ENCODE measurements at regions of chr20 and their contacts with region 1.

Region 1: GRCh38 chr20:407133-407952 is 756 bp upstream of the RBCK1 start:
- DNase-seq: peak in 7 of 9 experiments; percentile 48 to 83 (median 68)
- ATAC-seq: peak; percentile 71
- H3K4me3 ChIP-seq: peak overlapping the region; percentile 56 to 71
- H3K4me3 Mint-ChIP-seq: peak overlapping the region; percentile 91
- H3K27ac ChIP-seq: peak overlapping the region; percentile 9 to 41
- H3K27ac Mint-ChIP-seq: peak overlapping the region; percentile 95
- H3K4me1 ChIP-seq: peaks cover 34% of the 10 kb centered on the region
- H3K4me1 Mint-ChIP-seq: peaks cover 47% of the 10 kb centered on the region
- H3K27me3 ChIP-seq: no peaks in the 10 kb centered on the region
- H3K27me3 Mint-ChIP-seq: no peaks in the 10 kb centered on the region
- CTCF ChIP-seq: peak; percentile 45

Region 2: DNA sequence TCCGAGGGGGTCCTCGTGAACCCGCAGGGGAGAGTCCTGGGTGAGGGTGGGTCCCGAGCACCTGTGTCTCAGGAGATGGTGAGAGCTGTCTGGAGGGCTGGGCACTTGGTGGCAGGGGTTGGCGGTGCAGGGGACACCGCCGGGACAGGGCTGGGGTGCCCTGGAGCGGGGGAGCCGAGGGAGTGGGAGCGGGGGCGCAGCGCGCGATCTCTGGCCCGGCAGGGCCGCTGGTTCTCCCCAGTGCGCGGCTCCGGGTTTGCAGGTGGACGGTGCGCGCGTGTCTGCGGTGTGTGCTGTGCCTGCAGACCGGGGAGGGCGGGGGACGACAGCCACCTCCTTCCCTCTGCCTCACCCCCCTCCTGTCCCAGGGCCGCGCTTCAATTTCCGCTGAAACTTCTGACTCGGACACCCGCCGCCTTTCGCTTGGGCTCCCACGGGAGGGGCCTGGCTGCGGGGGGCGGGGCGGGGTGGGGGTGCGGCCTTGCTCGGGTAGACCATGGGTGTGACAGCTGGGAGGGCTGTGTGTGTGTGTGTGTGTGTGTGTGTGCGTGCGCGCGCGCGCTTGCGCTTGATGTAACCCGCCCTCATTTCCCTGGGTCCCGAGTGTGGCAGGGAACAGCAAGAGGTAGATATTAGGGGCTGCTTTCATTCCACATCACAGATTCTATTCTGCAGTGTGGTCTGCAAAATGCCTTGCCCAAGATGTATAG is 25.6 kb before region 1 on chr20:
- CTCF ChIA-PET with region 1: interaction called, 3 read pairs
- POLR2A ChIA-PET with region 1: no interaction called
- intact Hi-C with region 1: loop called (anchors 1 kb)
- DNase-seq: peak; percentile 35 to 87 (median 70)
- ATAC-seq: peak; percentile 67
- H3K4me3 ChIP-seq: peak overlapping the region; percentile 76 to 77
- H3K4me3 Mint-ChIP-seq: peak overlapping the region; percentile 80
- H3K27ac ChIP-seq: peak overlapping the region; percentile 27 to 48
- H3K27ac Mint-ChIP-seq: peak overlapping the region; percentile 78
- H3K4me1 ChIP-seq: no peaks in the 10 kb centered on the region
- H3K4me1 Mint-ChIP-seq: peaks cover 13% of the 10 kb centered on the region
- H3K27me3 ChIP-seq: no peaks in the 10 kb centered on the region
- H3K27me3 Mint-ChIP-seq: no peaks in the 10 kb centered on the region
- CTCF ChIP-seq: no peak

Region 3: GRCh38 chr20:431012-431904 is 23.9 kb after region 1 on chr20:
- CTCF ChIA-PET with region 1: no interaction called
- POLR2A ChIA-PET with region 1: interaction called, 3 read pairs
- intact Hi-C with region 1: loop called in 1 of 2 experiments (anchors 2 kb)
- DNase-seq: peak in 5 of 9 experiments; percentile 18 to 51 (median 32)
- ATAC-seq: no peak
- H3K4me3 ChIP-seq: no peak overlapping the region
- H3K4me3 Mint-ChIP-seq: no peak overlapping the region
- H3K27ac ChIP-seq: no peak overlapping the region
- H3K27ac Mint-ChIP-seq: no peak overlapping the region
- H3K4me1 ChIP-seq: peaks cover 19% of the 10 kb centered on the region
- H3K4me1 Mint-ChIP-seq: peaks cover 24% of the 10 kb centered on the region
- H3K27me3 ChIP-seq: no peaks in the 10 kb centered on the region
- H3K27me3 Mint-ChIP-seq: no peaks in the 10 kb centered on the region
- CTCF ChIP-seq: no peak